Prostate gland (tissue), 2 donors: ENCODE measurements at regions of chr6 and their contacts with region 1.

Region 1: DNA sequence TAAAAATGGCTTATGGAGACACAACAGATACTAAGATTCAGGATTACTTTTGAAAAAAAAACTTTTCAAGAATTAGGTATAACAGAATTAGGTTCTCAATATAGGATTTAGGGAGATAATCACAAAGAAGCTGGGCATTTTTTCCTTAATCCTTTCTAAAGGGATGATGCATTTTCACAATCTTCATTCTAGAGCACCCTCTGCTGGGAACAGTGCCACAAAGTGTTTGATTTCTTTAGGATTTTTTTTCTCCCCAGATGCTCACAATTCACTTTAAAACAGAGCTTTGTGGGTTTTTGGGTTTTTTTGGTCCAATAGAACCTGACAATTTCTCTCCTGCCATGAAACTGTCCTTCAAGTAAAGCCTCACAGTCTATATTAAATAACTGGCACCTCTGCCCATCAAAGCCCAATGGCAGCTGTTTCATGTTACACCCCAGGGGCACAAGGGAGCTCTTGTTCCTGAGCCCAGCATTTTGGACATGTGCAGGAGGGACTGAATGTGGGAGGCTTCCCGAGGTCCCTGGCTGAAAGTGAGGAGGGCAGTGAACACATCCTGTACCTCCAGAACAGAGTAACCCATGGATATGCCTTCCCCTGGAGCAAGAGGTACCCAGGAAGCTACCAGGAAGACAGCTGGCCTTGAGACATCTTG is 39.7 kb downstream of the PREP start:
- DNase-seq: no peak
- H3K4me3 ChIP-seq: no peak overlapping the region
- H3K27ac ChIP-seq: no peak overlapping the region
- H3K4me1 ChIP-seq: no peaks in the 10 kb centered on the region
- H3K27me3 ChIP-seq: no peaks in the 10 kb centered on the region
- CTCF ChIP-seq: peak in 3 of 4 experiments; percentile 19 to 44 (median 32)
- POLR2A ChIP-seq: no peak

Region 2: GRCh38 chr6:105097288-105097687 is 265.9 kb before region 1 on chr6:
- intact Hi-C with region 1: loop called (anchors 10 kb)
- DNase-seq: no peak
- H3K4me3 ChIP-seq: no peak overlapping the region
- H3K27ac ChIP-seq: no peak overlapping the region
- H3K4me1 ChIP-seq: no peaks in the 10 kb centered on the region
- H3K27me3 ChIP-seq: no peaks in the 10 kb centered on the region
- CTCF ChIP-seq: no peak
- POLR2A ChIP-seq: no peak

Region 3: DNA sequence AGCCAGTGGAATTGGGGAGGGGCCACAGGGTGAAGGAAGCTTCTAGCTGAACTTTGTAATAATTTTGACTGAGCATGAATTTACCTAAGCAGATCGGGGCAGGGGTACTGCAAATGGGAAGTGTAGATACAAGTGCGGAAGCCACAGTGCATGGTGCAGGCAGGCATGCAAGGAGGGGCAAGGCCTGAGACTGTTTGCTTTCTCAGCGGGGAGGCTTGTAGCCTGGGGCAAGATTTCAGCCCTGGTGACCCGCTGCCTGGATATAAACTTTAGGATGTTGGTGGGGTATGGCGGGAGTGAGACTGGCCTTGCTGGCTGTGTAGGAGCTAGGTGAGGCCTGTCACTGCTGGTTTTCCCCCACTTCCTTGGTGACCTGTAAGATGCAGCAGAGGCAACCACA is 306.0 kb after region 1 on chr6:
- intact Hi-C with region 1: no loop called
- DNase-seq: no peak
- H3K4me3 ChIP-seq: no peak overlapping the region
- H3K27ac ChIP-seq: no peak overlapping the region
- H3K4me1 ChIP-seq: no peaks in the 10 kb centered on the region
- H3K27me3 ChIP-seq: no peaks in the 10 kb centered on the region
- CTCF ChIP-seq: no peak
- POLR2A ChIP-seq: no peak